Activated T-helper 2 cell treated with anti-CD3 and anti-CD28 coated beads, Interferon-gamma antibody, Interleukin-2, Interleukin-4, amounts not matched to agents 10 μg/mL and 5 μg/mL and 100 μg/mL, durations not matched to agents 14 hours and 24 hours and 36 hours (primary cell): ENCODE measurements at regions of chr5 and their contacts with region 1.

Region 1: DNA sequence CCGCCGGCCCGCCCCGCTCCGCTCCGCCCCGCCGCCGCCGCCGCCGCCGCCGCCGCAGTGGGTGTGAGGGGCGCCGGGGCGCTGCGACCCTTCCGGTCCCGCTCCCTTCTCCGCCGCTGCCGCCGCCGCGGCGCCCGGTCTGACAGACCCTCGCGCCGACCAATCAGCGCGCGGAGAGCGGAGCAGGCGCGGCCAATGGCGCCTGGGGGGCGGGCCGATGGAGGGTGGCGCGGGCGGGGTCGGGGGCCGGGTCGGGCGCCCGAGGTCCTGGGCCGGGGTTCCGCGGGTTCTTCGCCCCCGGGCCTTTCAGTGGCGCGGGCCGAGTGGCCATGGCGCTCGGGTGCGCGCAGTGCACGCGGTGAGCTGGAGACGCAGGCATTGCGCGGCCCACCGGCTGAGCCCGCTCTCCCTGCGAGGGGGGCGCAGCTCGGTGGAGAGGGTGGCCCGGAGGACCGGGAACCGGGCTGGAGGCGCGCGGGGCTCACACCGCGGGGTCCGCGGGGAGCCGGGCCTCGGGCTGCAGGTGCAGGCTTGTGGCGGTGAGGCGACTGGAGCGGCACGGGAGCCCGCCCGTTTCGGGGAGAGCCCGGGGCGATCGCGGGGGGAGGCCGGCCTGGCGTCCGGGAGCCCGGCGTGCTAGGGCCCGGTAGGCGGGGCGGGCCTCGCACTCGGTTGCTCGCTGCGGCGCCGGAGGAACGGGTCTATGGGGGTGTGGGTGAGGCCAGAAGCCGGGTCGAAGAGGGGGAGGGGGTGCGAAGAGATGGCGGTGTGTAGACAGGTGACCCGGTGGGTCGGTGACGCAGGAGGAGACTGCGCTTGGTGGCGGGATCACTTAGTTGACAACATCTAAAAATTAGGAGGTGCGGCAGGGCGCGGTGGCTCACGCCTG is at the start of gene MAPK9:
- DNase-seq: peak; percentile 80
- H3K4me3 Mint-ChIP-seq: peak within 1 kb of the TSS; percentile 86
- H3K27ac Mint-ChIP-seq: peak within 1 kb of the TSS; percentile 83
- H3K4me1 Mint-ChIP-seq: peaks cover 29% of the 10 kb centered on the region
- H3K27me3 Mint-ChIP-seq: no peaks in the 10 kb centered on the region
- total RNA-seq, gene MAPK9: 43.1 and 44.3 TPM in 2 replicates

Region 2: GRCh38 chr5:180135128-180135955 is 156.8 kb before region 1 on chr5:
- intact Hi-C with region 1: loop called (anchors 10 kb)
- DNase-seq: peak; percentile 8
- H3K4me3 Mint-ChIP-seq: no peak overlapping the region
- H3K27ac Mint-ChIP-seq: peak overlapping the region; percentile 62
- H3K4me1 Mint-ChIP-seq: peaks cover 8% of the 10 kb centered on the region
- H3K27me3 Mint-ChIP-seq: no peaks in the 10 kb centered on the region

Region 3: GRCh38 chr5:180328296-180329137 is 36.3 kb after region 1 on chr5:
- intact Hi-C with region 1: loop called (anchors 1 kb)
- DNase-seq: peak; percentile 66
- H3K4me3 Mint-ChIP-seq: no peak overlapping the region
- H3K27ac Mint-ChIP-seq: no peak overlapping the region
- H3K4me1 Mint-ChIP-seq: no peaks in the 10 kb centered on the region
- H3K27me3 Mint-ChIP-seq: peaks cover 2% of the 10 kb centered on the region

Region 4: GRCh38 chr5:180441563-180441962 is 149.4 kb after region 1 on chr5:
- intact Hi-C with region 1: no loop called
- DNase-seq: no peak
- H3K4me3 Mint-ChIP-seq: no peak overlapping the region
- H3K27ac Mint-ChIP-seq: no peak overlapping the region
- H3K4me1 Mint-ChIP-seq: no peaks in the 10 kb centered on the region
- H3K27me3 Mint-ChIP-seq: peaks cover 6% of the 10 kb centered on the region

Region 5: DNA sequence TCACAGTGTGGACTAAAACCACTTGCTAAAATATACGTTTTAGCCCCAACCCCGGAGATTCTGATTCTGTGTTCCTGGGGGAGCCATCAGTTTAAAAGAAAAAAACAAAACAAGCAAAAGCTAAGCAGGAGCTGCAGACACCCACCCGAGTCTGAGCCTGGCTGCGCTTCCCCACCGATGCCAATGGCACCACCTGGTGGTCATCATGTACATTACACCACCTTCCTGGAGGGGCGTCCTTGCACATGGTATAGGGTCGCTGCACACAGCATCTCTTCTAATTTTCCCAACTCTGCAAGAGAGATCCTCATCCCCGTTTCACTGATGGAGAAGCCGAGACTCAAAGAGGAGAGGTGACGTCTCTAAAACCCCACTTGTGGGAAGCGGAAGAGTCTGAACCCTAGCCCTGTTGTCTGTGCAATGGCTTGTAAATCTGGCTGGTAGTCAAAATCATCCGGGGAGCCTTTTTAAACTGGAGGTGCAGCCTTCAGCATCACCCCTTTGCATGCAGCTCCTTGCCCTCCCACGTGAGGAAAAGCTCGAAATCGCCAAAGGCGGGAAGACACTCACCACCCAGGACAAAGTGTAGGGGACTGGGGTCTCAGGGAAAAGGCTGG is 178.9 kb after region 1 on chr5:
- intact Hi-C with region 1: loop called (anchors 2 kb)
- DNase-seq: peak; percentile 18
- H3K4me3 Mint-ChIP-seq: no peak overlapping the region
- H3K27ac Mint-ChIP-seq: no peak overlapping the region
- H3K4me1 Mint-ChIP-seq: no peaks in the 10 kb centered on the region
- H3K27me3 Mint-ChIP-seq: peaks cover 7% of the 10 kb centered on the region